ENCODE measurements at regions of chr17 and their contacts with region 1.

Region 1: GRCh38 chr17:48593840-48594537 is 410 bp upstream of the HOXB5 start:
- DNase-seq: peak; percentile 93
- H3K4me3 ChIP-seq: peak overlapping the region; percentile 89
- H3K27ac ChIP-seq: peak overlapping the region; percentile 91
- H3K27me3 ChIP-seq: no peaks in the 10 kb centered on the region
- CTCF ChIP-seq: peak; percentile 95

Region 2: DNA sequence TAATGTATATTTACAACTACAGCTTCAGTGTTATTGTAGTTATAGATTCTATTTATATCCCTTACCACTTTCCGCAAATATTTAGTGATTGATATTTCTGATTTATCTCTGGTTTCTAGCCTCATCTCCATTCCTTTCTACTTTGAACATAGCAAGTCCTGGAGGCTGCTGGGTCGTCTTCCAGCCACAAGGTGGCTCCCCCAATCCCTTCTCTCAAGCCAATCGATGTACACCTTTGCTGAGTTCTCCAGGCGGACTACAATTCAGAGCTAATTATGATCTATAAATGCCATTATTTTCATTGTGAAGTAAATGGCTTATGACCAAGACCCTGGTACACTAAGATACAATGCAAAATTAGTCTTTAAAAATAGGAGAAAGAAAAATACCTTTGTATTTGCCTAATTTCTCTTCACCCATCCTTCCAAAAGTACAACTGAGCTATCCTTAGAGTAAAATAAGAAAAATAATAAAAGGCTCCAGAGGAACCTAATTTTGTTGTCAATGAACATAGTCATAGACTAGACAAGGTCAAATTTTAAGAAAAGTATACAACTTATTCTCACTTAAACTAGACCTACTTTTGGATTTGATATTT is 286.1 kb before region 1 on chr17:
- CTCF ChIA-PET with region 1: interaction called, 19 read pairs
- POLR2A ChIA-PET with region 1: no interaction called
- DNase-seq: peak; percentile 32
- H3K4me3 ChIP-seq: no peak overlapping the region
- H3K27ac ChIP-seq: no peak overlapping the region
- H3K27me3 ChIP-seq: peaks cover 51% of the 10 kb centered on the region
- CTCF ChIP-seq: peak; percentile 96

Region 3: DNA sequence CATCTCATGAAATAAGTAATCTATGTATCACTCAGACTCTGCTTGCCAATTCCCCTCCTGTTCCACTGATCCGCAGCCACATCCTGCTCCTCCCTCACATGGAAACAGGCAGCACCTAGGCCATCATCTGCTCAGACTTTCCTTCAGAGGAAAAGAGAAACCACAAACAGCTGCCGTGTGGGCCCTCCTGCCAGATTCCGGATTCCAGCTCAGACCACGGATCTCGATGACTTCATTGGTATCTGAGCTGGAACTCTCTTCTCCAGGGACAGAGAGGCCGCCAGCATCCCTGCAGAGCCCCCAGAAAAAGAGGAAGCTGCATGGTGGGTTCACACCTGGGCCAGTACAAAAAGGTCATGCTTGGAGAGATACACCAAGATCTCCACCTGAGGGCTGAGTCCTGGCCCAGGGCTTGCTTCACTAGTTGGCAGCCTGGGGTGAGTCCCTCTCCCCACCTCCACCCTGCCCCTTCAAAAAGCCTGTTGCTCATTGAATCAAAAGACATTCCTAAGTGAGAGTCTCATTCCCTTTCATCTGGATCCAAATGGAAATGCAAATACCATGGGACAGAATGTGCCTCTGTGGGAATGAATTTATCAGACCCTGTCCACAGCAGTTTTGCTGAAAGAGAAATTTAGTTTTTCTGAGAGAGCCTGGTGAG is 110.4 kb before region 1 on chr17:
- CTCF ChIA-PET with region 1: no interaction called
- POLR2A ChIA-PET with region 1: no interaction called
- DNase-seq: peak; percentile 97
- H3K4me3 ChIP-seq: peak overlapping the region; percentile 26
- H3K27ac ChIP-seq: peak overlapping the region; percentile 99
- H3K27me3 ChIP-seq: no peaks in the 10 kb centered on the region
- CTCF ChIP-seq: no peak

Region 4: DNA sequence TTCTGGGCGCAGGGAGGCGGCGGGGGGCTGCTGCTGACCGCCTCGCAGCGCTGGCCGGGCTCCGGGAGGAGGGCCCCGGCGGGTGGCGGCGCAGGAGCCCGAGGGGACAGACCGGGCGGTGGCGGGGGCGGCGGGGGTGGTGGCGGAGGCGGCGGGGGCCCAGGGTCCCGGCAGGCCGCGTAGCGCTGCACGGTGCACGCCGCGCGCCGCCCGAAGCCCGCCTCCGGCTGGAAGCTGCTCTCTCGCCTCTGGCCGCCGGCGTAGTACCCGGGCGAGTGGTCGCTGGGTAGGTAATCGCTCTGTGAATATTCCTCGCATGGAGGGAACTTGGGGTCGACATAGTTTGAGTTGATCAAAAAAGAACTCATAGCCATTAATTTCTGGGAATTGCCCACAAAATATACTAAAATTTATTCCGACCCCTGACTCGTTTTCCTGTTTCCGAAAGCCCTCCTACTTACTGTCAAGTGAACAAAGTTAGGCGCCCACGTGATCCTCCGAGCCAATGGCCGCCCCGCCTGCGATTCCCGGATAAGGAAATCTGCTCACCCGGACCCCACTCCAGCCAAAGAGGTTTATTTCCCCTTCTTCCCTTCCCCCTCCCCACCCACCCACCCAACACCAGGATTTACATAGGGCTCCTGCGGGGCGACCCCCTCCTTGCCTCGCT is 15.9 kb before region 1 on chr17 and contains the start of gene HOXB4:
- CTCF ChIA-PET with region 1: interaction called, 4 read pairs
- POLR2A ChIA-PET with region 1: interaction called, 11 read pairs
- DNase-seq: no peak
- H3K4me3 ChIP-seq: peak within 1 kb of the TSS; percentile 90
- H3K27ac ChIP-seq: peak within 1 kb of the TSS; percentile 98
- H3K27me3 ChIP-seq: no peaks in the 10 kb centered on the region
- CTCF ChIP-seq: no peak
- polyA plus RNA-seq, gene HOXB4: 5.8 and 6.1 TPM in 2 replicates

Region 5: DNA sequence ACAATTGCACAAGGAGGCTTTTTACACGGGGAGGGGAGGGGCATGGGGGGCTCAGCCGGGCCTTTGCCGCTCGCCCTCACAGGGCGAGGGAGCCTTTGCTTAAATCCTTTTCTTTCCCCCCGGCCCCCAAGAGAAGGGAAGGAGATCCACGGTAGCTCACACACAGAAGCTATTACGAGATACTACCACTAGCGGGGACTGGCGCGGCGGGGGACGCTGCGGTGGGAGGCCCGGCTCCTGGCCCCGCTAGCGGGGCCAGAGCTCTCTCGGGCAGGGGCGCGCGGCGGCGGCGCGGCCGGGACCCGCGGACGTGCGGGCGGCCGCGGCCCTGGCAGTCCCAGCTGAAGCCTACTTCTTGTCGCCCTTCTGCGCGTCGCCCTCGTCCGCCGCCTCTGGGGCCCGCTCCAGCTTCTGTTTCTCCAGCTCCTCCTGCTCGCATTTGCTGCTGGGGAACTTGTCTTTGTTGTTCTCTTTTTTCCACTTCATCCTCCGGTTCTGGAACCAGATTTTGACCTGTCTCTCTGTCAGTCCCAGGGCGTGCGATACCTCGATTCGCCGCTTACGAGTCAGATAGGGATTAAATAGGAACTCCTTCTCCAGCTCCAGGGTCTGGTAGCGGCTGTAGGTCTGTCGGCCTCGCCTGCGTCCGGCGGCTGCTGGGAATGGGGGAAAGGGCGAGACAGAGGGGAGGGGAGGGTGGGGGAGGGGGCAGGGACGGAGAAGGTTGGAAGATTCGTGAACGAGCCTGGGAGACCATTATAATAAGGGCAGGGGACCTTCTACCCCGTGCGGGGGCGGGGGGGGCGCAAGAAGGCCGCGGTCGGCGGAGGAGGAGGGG is 19.1 kb after region 1 on chr17:
- CTCF ChIA-PET with region 1: interaction called, 10 read pairs
- POLR2A ChIA-PET with region 1: interaction called, 13 read pairs
- DNase-seq: no peak
- H3K4me3 ChIP-seq: peak overlapping the region; percentile 67
- H3K27ac ChIP-seq: peak overlapping the region; percentile 31
- H3K27me3 ChIP-seq: peaks cover 45% of the 10 kb centered on the region
- CTCF ChIP-seq: peak; percentile 38

Region 6: DNA sequence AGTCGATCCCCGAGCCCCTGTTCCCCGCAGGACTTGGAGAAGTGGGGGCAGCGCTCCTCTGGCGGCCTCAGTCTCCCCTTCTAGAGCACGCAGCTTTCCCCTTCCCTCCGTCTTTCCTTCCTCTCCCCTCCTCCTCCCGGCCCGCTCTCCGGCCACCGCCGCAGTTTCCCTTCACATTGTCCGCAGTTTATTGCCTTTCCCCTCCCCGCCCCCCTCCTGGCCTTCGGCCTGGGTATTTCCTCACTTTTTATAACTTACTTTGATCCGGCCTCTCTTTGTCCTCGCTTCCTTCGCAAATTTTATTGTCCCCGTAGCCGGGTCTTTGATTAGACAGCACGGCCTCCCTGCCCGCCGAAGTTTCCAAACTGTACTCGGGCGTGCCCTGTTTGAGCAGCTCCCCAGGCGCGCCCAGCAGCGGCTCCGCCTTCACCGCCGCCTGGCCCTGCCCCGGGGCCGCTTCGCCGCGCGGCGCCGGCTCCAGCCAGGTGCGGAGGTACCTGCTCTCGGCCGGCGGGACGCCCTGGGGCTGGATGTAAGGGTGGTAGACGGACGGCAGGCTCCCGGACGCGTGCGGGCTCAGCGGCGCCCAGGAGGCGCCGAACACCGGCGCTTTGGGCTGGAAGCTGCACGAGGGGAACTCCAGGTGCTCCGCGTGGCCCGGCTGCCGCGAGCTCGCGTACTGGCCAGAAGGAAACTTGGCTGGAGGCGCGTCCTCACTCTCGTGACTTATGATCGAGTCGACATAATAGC is 31.7 kb after region 1 on chr17:
- CTCF ChIA-PET with region 1: no interaction called
- POLR2A ChIA-PET with region 1: no interaction called
- DNase-seq: no peak
- H3K4me3 ChIP-seq: peak overlapping the region; percentile 22
- H3K27ac ChIP-seq: no peak overlapping the region
- H3K27me3 ChIP-seq: peaks cover 98% of the 10 kb centered on the region
- CTCF ChIP-seq: no peak

Measured in AG04450 (cell line).